ENCODE measurements at regions of chr17 and their contacts with region 1.

Region 1: DNA sequence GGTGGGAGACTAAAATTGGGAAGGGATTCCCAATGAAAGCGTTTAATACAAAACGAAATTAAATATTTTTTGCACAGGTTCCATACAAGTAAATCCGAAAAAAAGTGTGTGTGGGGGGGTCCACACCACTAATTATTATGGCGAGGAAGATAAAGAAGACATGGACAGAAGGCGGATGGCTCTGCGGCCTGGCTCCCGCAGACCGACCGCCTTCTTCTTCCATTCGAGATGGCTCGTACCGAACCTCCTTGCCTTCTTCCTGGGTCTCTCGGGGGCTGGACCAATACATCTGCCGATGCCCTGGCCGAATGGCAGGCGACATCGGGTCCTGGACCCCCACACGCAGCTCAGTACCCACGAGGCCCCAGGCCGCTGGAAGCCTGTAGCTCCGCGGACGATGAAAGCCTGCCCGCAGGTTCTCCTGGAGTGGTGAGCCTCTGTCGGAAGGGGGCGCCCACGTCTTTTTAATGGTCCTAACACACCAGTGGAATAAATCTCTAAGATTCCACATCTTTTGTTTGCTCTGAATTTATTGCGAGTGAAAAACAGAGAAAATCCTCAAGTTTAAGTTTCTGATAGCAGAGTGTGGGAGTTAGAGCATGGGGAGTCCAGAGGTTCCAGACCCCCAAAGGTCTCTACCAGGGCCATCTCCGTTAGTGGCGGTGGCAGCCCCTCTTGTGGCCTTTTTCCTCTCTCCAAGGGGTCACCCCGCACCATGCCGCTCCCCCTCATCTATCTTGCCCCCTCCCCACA is 1.4 kb downstream of the PRAC2 start:
- DNase-seq: peak; percentile 57 to 76 (median 61)
- ATAC-seq: peak; percentile 96
- H3K4me3 ChIP-seq: no peak overlapping the region
- H3K27ac ChIP-seq: no peak overlapping the region
- H3K4me1 ChIP-seq: peaks cover 0 to 24% of the 10 kb centered on the region in 2 experiments; a peak in 2 of 5 replicates
- H3K27me3 ChIP-seq: peaks cover 68 to 84% of the 10 kb centered on the region in 2 experiments
- CTCF ChIP-seq: peak; percentile 79 to 84 (median 80)
- EP300 ChIP-seq: no peak
- POLR2A ChIP-seq: no peak
- RAD21 ChIP-seq: peak; percentile 46 to 73

Region 2: DNA sequence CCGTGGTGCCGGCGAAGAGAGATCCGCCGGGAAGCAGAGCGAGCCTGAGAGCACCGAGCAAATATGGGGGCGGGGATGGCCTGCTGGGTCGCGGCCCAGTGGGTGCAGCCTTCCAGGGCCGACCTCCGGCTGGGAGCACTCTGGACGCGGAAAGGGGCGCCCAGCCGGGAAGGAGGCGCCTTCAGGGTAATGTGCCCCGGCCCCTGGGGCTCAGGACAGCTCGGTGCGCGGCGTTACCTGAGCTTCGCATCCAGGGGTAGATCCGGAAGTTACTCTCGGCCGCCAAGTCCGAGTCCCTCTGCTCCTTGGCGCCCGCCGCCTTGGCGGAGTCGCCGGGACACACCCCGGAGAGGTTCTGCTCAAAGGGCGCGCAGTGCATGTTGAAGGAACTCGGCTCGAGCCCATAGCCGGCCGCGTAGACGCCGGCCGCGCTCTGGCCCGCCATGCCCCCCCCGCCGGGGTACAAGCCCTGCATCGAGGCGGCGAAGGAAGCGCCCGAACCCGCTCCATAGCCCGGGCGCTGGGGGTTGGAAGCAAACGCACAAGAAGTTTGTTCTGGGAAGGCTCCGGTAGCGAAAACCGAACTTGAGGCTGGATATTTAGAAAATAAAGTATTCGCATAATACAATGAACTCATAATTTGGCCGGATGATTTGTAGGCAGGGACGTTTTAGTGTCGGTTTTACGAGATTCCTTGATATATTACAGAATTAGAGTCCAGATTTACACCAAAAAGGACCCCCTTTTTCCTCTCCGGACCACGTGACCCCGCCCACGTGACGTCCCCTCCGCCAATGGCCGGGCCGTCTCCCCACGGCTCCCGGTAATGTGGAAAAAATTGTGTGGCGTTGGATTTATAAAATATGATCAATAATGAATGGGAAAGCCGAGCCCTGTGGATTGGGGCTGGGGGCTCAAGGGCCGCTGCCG is 113.9 kb before region 1 on chr17 and contains the start of gene HOXB7:
- CTCF ChIA-PET with region 1: no interaction called
- POLR2A ChIA-PET with region 1: no interaction called
- in situ Hi-C with region 1: no loop called
- intact Hi-C with region 1: no loop called
- DNase-seq: peak; percentile 74 to 84 (median 75)
- ATAC-seq: peak; percentile 75
- H3K4me3 ChIP-seq: peak within 1 kb of the TSS; percentile 56
- H3K27ac ChIP-seq: peak within 1 kb of the TSS; percentile 86
- H3K4me1 ChIP-seq: peaks cover 21 to 55% of the 10 kb centered on the region in 2 experiments
- H3K27me3 ChIP-seq: no peaks in the 10 kb centered on the region
- CTCF ChIP-seq: no peak
- EP300 ChIP-seq: no peak
- POLR2A ChIP-seq: peak; percentile 47; the same call in 1 of the 2 replicates
- RAD21 ChIP-seq: no peak
- polyA plus RNA-seq, gene HOXB7: 5.7 to 5.8 TPM

Region 3: GRCh38 chr17:48678141-48678971 is 46.1 kb before region 1 on chr17:
- CTCF ChIA-PET with region 1: no interaction called
- POLR2A ChIA-PET with region 1: no interaction called
- in situ Hi-C with region 1: no loop called
- intact Hi-C with region 1: loop called (anchors 2 kb)
- DNase-seq: peak; percentile 82 to 87 (median 85)
- ATAC-seq: peak; percentile 99
- H3K4me3 ChIP-seq: no peak overlapping the region
- H3K27ac ChIP-seq: no peak overlapping the region
- H3K4me1 ChIP-seq: peaks cover 0 to 8% of the 10 kb centered on the region in 2 experiments; a peak in 2 of 5 replicates
- H3K27me3 ChIP-seq: peaks cover 20 to 21% of the 10 kb centered on the region in 2 experiments; a peak in 4 of 5 replicates
- CTCF ChIP-seq: peak; percentile 96 to 99 (median 98)
- EP300 ChIP-seq: no peak
- POLR2A ChIP-seq: no peak
- RAD21 ChIP-seq: peak; percentile 85 to 90

Region 4: GRCh38 chr17:48761114-48761513 is 36.7 kb after region 1 on chr17:
- CTCF ChIA-PET with region 1: no interaction called
- POLR2A ChIA-PET with region 1: no interaction called
- in situ Hi-C with region 1: no loop called
- intact Hi-C with region 1: no loop called
- DNase-seq: no peak
- ATAC-seq: no peak
- H3K4me3 ChIP-seq: no peak overlapping the region
- H3K27ac ChIP-seq: no peak overlapping the region
- H3K4me1 ChIP-seq: no peaks in the 10 kb centered on the region
- H3K27me3 ChIP-seq: peaks cover 32 to 42% of the 10 kb centered on the region in 2 experiments; a peak in 4 of 5 replicates
- CTCF ChIP-seq: no peak
- EP300 ChIP-seq: no peak
- POLR2A ChIP-seq: no peak
- RAD21 ChIP-seq: no peak

Region 5: DNA sequence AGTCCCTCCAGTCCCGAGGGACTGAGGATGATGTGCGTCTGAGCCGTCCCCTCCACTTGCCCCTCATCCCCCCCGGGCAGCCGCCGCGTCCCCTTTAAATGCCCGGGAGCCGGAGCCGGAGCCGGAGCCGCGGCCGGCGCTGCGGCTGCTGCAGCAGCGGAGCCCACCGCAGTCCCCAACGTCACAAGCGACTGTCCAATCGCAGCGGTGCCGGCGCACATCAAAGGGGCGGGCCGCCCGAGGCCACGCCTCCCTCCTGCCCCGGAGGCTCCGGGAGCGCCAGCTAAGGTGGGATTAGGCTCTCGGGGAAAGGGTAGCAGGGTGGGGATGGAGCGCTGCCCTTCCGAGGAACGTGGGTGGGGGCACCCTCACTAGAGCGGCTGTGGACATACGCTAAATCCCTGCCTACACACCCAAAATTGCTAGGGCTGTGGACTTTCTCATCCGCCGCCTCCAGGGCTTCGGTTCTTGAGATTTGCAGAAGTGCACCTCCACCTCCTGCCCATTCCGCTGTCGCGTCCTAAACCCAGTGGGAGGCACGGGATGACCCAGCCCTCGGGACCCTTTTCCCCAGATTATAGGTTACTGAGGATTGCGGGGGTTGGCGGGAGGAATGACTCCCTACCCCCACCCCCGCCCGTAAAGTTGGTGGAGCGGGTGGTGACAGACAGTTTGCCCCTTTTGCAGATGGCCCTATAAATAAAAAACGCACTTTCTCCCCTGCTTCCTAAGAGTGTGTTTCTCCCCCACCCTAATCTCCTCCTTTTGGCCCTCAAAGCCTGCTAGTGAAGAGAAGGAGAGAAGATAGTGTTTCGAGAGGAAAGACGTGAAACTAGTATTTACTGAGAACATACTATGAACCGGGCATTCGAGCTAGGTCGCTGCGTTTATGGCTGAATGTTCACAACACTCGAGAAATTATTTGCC is 506.5 kb after region 1 on chr17 and contains the start of gene PHOSPHO1:
- CTCF ChIA-PET with region 1: no interaction called
- POLR2A ChIA-PET with region 1: no interaction called
- in situ Hi-C with region 1: no loop called
- intact Hi-C with region 1: no loop called
- DNase-seq: peak; percentile 88 to 98 (median 96)
- ATAC-seq: peak; percentile 98
- H3K4me3 ChIP-seq: peak within 1 kb of the TSS; percentile 65
- H3K27ac ChIP-seq: no peak within 1 kb of the TSS
- H3K4me1 ChIP-seq: peaks cover 5 to 17% of the 10 kb centered on the region in 2 experiments; a peak in 4 of 5 replicates
- H3K27me3 ChIP-seq: peaks cover 0 to 27% of the 10 kb centered on the region in 2 experiments; a peak in 2 of 5 replicates
- CTCF ChIP-seq: 0 out of 6 replicates have a peak, but pooled peaks of 1 of the 3 experiments have one; percentile 4
- EP300 ChIP-seq: no peak
- POLR2A ChIP-seq: no peak
- RAD21 ChIP-seq: no peak
- polyA plus RNA-seq, gene PHOSPHO1: not detected

Measured in K562 (cell line).